Endothelial cell of umbilical vein (primary cell): ENCODE measurements at regions of chr17 and their contacts with region 1.

Region 1: GRCh38 chr17:42677008-42677857 is 439 bp upstream of the PLEKHH3 start:
- DNase-seq: peak; percentile 100
- H3K4me3 ChIP-seq: peak overlapping the region in 2 of 3 experiments; percentile 70 to 87
- H3K27ac ChIP-seq: peak overlapping the region; percentile 47
- H3K4me1 ChIP-seq: peaks cover 42% of the 10 kb centered on the region
- H3K27me3 ChIP-seq: no peaks in the 10 kb centered on the region
- CTCF ChIP-seq: no peak
- POLR2A ChIP-seq: peak; percentile 24

Region 2: GRCh38 chr17:42609182-42609813 is 67.9 kb before region 1 on chr17 and contains the starts of genes RETREG3 and TUBG1:
- CTCF ChIA-PET with region 1: interaction called, 109 read pairs
- POLR2A ChIA-PET with region 1: interaction called, 5 read pairs
- dilution Hi-C with region 1: no loop called
- intact Hi-C with region 1: loop called (anchors 1 kb)
- DNase-seq: peak; percentile 99
- H3K4me3 ChIP-seq: peak within 1 kb of the TSS; percentile 73 to 81 (median 79)
- H3K27ac ChIP-seq: peak within 1 kb of the TSS; percentile 69
- H3K4me1 ChIP-seq: peaks cover 11% of the 10 kb centered on the region
- H3K27me3 ChIP-seq: no peaks in the 10 kb centered on the region
- CTCF ChIP-seq: peak; percentile 39 to 72
- POLR2A ChIP-seq: peak; percentile 89
- total RNA-seq, gene RETREG3: 52.3 and 53.4 TPM in 2 replicates
- total RNA-seq, gene TUBG1: 96.9 and 102 TPM in 2 replicates

Region 3: GRCh38 chr17:42618442-42619150 is 58.6 kb before region 1 on chr17:
- CTCF ChIA-PET with region 1: interaction called, 14 read pairs
- POLR2A ChIA-PET with region 1: no interaction called
- dilution Hi-C with region 1: no loop called
- intact Hi-C with region 1: no loop called
- DNase-seq: no peak
- H3K4me3 ChIP-seq: no peak overlapping the region
- H3K27ac ChIP-seq: no peak overlapping the region
- H3K4me1 ChIP-seq: no peaks in the 10 kb centered on the region
- H3K27me3 ChIP-seq: no peaks in the 10 kb centered on the region
- CTCF ChIP-seq: no peak
- POLR2A ChIP-seq: no peak

Region 4: GRCh38 chr17:42659079-42659931 is 17.9 kb before region 1 on chr17 and contains the start of gene TUBG2:
- CTCF ChIA-PET with region 1: interaction called, 14 read pairs
- POLR2A ChIA-PET with region 1: interaction called, 3 read pairs
- dilution Hi-C with region 1: no loop called
- intact Hi-C with region 1: loop called (anchors 2 kb)
- DNase-seq: peak; percentile 92
- H3K4me3 ChIP-seq: peak within 1 kb of the TSS; percentile 2 to 51 (median 40)
- H3K27ac ChIP-seq: no peak within 1 kb of the TSS
- H3K4me1 ChIP-seq: peaks cover 17% of the 10 kb centered on the region
- H3K27me3 ChIP-seq: no peaks in the 10 kb centered on the region
- CTCF ChIP-seq: no peak
- POLR2A ChIP-seq: peak; percentile 86
- total RNA-seq, gene TUBG2: 13.1 and 13.2 TPM in 2 replicates

Region 5: GRCh38 chr17:42779936-42780850 is 103.0 kb after region 1 on chr17 and contains the start of gene WNK4:
- CTCF ChIA-PET with region 1: no interaction called
- POLR2A ChIA-PET with region 1: no interaction called
- dilution Hi-C with region 1: no loop called
- intact Hi-C with region 1: loop called (anchors 5 kb)
- DNase-seq: peak; percentile 23
- H3K4me3 ChIP-seq: peak within 1 kb of the TSS in 2 of 3 experiments; percentile 18 to 48
- H3K27ac ChIP-seq: no peak within 1 kb of the TSS
- H3K4me1 ChIP-seq: peaks cover 43% of the 10 kb centered on the region
- H3K27me3 ChIP-seq: peaks cover 7 to 9% of the 10 kb centered on the region in 2 experiments
- CTCF ChIP-seq: no peak
- POLR2A ChIP-seq: peak; percentile 55
- total RNA-seq, gene WNK4: 1.9 TPM in 2 replicates